Colonic mucosa (tissue), 4 donors: ENCODE measurements at regions of chr5 and their contacts with region 1.

Region 1: DNA sequence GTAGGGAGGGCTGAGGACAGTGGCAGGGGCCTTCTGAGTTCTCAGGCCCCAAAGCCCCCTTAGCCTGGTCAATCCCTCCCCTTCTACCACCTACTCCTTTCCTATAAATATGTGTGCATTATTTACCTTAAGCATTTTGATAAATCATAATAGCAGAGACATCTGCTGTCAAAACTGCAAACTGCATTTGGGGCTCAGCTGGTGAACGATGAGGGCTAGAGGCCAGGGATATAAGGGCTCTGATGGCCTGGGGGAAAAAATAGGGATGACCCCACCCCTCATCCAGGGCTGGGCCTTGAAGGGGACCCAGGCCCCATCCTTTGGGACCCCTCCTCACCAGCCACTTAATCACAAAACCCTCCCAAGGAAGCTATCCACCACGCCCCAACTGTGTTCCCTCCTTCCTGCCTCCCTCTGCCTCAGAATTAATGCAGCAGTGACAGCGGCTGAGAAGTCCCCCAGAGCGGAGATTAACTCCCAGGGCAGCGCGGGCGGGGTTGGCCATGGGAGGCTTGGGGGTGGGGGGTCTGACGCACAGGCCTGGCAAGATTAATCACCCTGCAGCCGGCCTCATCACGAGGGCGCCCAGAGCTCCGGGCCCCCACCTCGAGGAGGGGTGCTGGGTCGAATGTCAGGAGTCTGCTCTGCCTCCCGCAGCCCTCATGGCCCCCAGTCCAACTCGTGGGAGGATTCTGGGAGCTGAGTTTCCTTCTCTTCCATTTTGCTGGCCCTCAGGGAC is 42.1 kb downstream of the CXXC5 start:
- DNase-seq: peak; percentile 57
- H3K4me3 ChIP-seq: no peak overlapping the region
- H3K27ac ChIP-seq: no peak overlapping the region
- H3K4me1 ChIP-seq: peaks cover 8% of the 10 kb centered on the region
- H3K27me3 ChIP-seq: no peaks in the 10 kb centered on the region
- CTCF ChIP-seq: peak; percentile 43

Region 2: GRCh38 chr5:139633295-139634027 is 56.8 kb before region 1 on chr5:
- intact Hi-C with region 1: loop called (anchors 2 kb)
- DNase-seq: peak; percentile 73
- H3K4me3 ChIP-seq: no peak overlapping the region
- H3K27ac ChIP-seq: no peak overlapping the region
- H3K4me1 ChIP-seq: peaks cover 13% of the 10 kb centered on the region
- H3K27me3 ChIP-seq: no peaks in the 10 kb centered on the region
- CTCF ChIP-seq: peak; percentile 95